GM12878 (cell line): ENCODE measurements at regions of chrX and their contacts with region 1.

Region 1: GRCh38 chrX:22135994-22136684 is 104.0 kb downstream of the PHEX start:
- DNase-seq: no peak
- ATAC-seq: peak; percentile 43
- H3K4me3 ChIP-seq: no peak overlapping the region
- H3K27ac ChIP-seq: no peak overlapping the region
- H3K4me1 ChIP-seq: no peaks in the 10 kb centered on the region
- H3K27me3 ChIP-seq: no peaks in the 10 kb centered on the region
- CTCF ChIP-seq: peak; percentile 51 to 68 (median 68)
- EP300 ChIP-seq: no peak
- POLR2A ChIP-seq: no peak
- RAD21 ChIP-seq: peak; percentile 78

Region 2: DNA sequence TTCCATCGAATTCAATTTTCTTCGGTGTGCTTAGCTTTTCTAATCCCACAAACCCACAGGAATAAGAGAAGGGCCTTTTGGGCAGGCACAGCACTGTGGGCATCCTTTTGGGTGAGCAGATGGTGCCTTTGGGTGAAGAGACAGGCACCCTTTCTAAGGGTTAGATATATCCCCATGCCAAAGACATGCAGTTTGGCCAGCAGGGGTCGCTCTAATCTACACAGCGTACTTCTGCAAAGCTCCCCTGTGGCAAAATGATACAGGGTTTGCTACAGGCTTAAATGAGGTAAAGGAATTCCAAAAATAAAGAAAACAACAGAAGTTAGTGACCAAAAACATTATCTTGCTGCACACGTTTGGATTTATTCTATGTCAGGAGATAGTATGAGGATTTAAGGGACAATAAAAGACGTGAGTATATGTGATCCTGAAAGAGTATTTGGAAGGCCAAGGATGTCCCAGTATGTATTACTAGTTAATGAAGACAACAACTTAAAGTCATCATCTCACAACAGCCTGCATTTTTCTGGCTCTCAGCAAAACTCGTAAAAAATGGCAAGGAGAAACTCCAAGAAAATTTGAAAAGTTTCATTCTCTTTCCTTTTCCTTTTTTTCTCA is 54.6 kb before region 1 on chrX:
- CTCF ChIA-PET with region 1: interaction called, 45 read pairs
- POLR2A ChIA-PET with region 1: interaction called, 3 read pairs
- RAD21 ChIA-PET with region 1: interaction called, 39 read pairs
- SMC1A ChIA-PET with region 1: interaction called, 45 read pairs
- in situ Hi-C with region 1: no loop called
- intact Hi-C with region 1: no loop called
- DNase-seq: no peak
- ATAC-seq: peak; percentile 96
- H3K4me3 ChIP-seq: no peak overlapping the region
- H3K27ac ChIP-seq: no peak overlapping the region
- H3K4me1 ChIP-seq: no peaks in the 10 kb centered on the region
- H3K27me3 ChIP-seq: no peaks in the 10 kb centered on the region
- CTCF ChIP-seq: peak; percentile 56 to 79 (median 77)
- EP300 ChIP-seq: no peak
- POLR2A ChIP-seq: no peak
- RAD21 ChIP-seq: peak; percentile 53

Region 3: DNA sequence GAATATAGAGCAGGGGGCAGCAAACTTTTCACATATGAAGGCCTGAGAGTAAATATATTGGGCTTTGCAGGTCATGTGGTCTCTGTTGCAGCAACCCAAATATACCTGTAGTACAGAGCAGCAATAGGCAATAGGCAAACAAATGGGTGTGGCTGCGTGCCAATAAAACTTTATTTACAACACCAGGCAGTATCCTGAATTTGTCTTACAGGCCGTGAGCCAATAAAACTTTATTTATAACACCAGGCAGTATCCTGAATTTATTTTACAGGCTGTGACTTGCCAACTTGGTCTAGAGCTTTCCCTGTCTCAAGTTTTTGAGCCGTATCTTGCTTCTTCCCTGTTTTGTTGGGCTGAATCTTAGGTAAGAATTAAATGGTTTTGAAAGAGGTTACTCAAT is 14.2 kb after region 1 on chrX:
- CTCF ChIA-PET with region 1: interaction called, 21 read pairs
- POLR2A ChIA-PET with region 1: no interaction called
- RAD21 ChIA-PET with region 1: interaction called, 3 read pairs
- SMC1A ChIA-PET with region 1: interaction called, 5 read pairs
- in situ Hi-C with region 1: no loop called
- intact Hi-C with region 1: no loop called
- DNase-seq: no peak
- ATAC-seq: no peak
- H3K4me3 ChIP-seq: no peak overlapping the region
- H3K27ac ChIP-seq: no peak overlapping the region
- H3K4me1 ChIP-seq: no peaks in the 10 kb centered on the region
- H3K27me3 ChIP-seq: no peaks in the 10 kb centered on the region
- CTCF ChIP-seq: no peak
- EP300 ChIP-seq: no peak
- POLR2A ChIP-seq: no peak
- RAD21 ChIP-seq: no peak

Region 4: DNA sequence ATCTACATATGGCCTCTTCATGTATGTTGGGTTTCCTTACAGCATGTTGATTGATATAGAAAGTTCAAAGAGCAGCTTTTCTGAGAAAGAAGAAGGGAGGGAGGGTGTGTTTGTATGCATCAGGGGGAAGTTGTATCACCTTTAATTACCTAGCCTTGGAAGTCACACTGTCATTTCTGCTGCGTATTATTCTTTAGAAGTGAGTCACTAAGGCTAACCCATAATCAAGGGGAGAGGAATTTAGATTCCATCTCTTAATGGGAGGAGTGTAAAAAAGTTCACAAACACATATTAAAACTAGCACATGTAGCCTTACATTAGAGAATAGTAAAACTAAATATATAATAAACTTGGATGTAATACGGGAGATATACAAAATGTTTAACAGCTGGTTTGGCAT is 50.0 kb after region 1 on chrX:
- CTCF ChIA-PET with region 1: interaction called, 13 read pairs
- POLR2A ChIA-PET with region 1: no interaction called
- RAD21 ChIA-PET with region 1: interaction called, 19 read pairs
- SMC1A ChIA-PET with region 1: interaction called, 9 read pairs
- in situ Hi-C with region 1: no loop called
- intact Hi-C with region 1: no loop called
- DNase-seq: no peak
- ATAC-seq: peak; percentile 74
- H3K4me3 ChIP-seq: no peak overlapping the region
- H3K27ac ChIP-seq: no peak overlapping the region
- H3K4me1 ChIP-seq: no peaks in the 10 kb centered on the region
- H3K27me3 ChIP-seq: no peaks in the 10 kb centered on the region
- CTCF ChIP-seq: no peak
- EP300 ChIP-seq: no peak
- POLR2A ChIP-seq: no peak
- RAD21 ChIP-seq: no peak

Region 5: GRCh38 chrX:22748093-22748999 is 612.2 kb after region 1 on chrX:
- CTCF ChIA-PET with region 1: interaction called, 32 read pairs
- POLR2A ChIA-PET with region 1: no interaction called
- RAD21 ChIA-PET with region 1: interaction called, 36 read pairs
- SMC1A ChIA-PET with region 1: interaction called, 26 read pairs
- in situ Hi-C with region 1: loop called (anchors 10 kb)
- intact Hi-C with region 1: loop called (anchors 1 kb)
- DNase-seq: no peak
- ATAC-seq: peak; percentile 96
- H3K4me3 ChIP-seq: no peak overlapping the region
- H3K27ac ChIP-seq: no peak overlapping the region
- H3K4me1 ChIP-seq: no peaks in the 10 kb centered on the region
- H3K27me3 ChIP-seq: no peaks in the 10 kb centered on the region
- CTCF ChIP-seq: peak; percentile 67 to 82 (median 80)
- EP300 ChIP-seq: no peak
- POLR2A ChIP-seq: no peak
- RAD21 ChIP-seq: peak; percentile 52

Region 6: DNA sequence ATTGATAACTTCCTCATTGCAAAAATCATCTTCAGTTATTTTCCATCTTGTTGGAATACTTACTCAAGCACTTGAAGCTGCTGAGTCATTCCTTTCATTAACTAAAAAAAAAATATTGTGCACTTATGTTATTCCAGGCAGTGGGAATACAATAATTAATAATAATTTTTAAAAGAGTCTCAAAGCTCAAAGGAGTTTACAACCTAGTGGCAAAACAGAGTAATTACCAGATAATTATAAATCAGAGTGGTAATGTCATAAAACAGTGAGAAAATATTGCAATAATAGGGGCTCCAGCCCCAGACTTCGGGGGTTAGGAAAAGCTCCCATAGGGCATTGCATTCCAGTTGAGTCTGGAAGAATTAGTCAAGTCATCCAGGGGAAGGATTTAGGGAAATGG is 943.2 kb after region 1 on chrX:
- CTCF ChIA-PET with region 1: no interaction called
- POLR2A ChIA-PET with region 1: no interaction called
- RAD21 ChIA-PET with region 1: no interaction called
- SMC1A ChIA-PET with region 1: no interaction called
- in situ Hi-C with region 1: no loop called
- intact Hi-C with region 1: no loop called
- DNase-seq: no peak
- ATAC-seq: no peak
- H3K4me3 ChIP-seq: no peak overlapping the region
- H3K27ac ChIP-seq: no peak overlapping the region
- H3K4me1 ChIP-seq: no peaks in the 10 kb centered on the region
- H3K27me3 ChIP-seq: no peaks in the 10 kb centered on the region
- CTCF ChIP-seq: no peak
- EP300 ChIP-seq: no peak
- POLR2A ChIP-seq: no peak
- RAD21 ChIP-seq: no peak